Aorta (tissue), 5 donors: ENCODE measurements at regions of chr7 and their contacts with region 1.

Region 1: GRCh38 chr7:123557398-123558288 is at the start of gene NDUFA5:
- DNase-seq: peak; percentile 96 to 98
- ATAC-seq: peak; percentile 100
- H3K4me3 ChIP-seq: peak within 1 kb of the TSS; percentile 93 to 99
- H3K27ac ChIP-seq: peak within 1 kb of the TSS; percentile 85 to 94
- H3K4me1 ChIP-seq: peaks cover 0 to 2% of the 10 kb centered on the region in 2 donors
- H3K27me3 ChIP-seq: no peaks in the 10 kb centered on the region
- total RNA-seq, gene NDUFA5: 51.1 to 53.6 TPM

Region 2: GRCh38 chr7:123601530-123601929 is 43.9 kb after region 1 on chr7 and contains the start of gene ASB15:
- intact Hi-C with region 1: no loop called
- DNase-seq: no peak
- ATAC-seq: no peak
- H3K4me3 ChIP-seq: no peak within 1 kb of the TSS
- H3K27ac ChIP-seq: no peak within 1 kb of the TSS
- H3K4me1 ChIP-seq: no peaks in the 10 kb centered on the region
- H3K27me3 ChIP-seq: no peaks in the 10 kb centered on the region
- total RNA-seq, gene ASB15: not detected

Region 3: DNA sequence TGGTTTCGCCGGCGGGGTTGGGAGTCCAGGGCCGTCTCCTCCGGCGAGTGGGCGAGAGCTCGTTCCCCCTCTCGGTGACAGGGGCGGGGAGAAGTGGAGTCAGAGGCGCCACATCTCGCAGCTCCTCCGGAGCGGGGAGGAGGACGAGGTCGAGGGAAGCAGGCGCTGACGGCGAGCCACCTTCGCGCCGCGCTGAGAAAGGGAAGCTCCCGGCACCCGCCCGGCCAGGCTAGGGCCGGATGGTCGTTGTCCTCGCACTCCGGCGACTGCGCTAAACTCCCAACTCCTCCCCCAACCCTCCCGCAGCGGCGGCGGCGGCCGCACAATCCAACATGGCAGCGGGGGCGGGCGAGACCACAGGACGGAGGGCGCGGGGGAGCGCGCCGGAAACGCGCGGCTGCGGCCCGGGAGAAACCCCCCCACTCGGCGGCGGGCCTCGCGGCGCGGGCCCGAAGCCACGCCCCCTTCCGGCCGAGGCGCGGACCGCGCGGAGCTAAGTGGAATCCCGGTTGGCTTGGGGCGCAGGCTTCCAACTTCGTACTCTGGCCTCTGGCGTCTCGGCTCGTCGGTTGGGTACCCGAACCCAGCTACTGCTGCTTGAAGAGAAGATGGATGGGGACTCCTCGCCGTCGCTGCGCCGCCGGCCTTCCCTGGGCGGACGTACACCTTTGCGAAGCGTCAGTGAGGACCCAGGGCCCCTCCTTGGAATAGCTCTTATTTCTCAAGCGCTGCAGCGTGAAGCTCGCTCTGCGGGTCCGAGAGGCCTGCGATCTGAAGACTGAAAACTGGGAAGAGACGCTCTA is 191.3 kb after region 1 on chr7 and contains the start of gene WASL:
- intact Hi-C with region 1: loop called in 1 of 2 experiments (anchors 5 kb)
- DNase-seq: peak; percentile 94 to 98
- ATAC-seq: peak; percentile 98
- H3K4me3 ChIP-seq: peak within 1 kb of the TSS; percentile 83 to 85
- H3K27ac ChIP-seq: peak within 1 kb of the TSS; percentile 96 to 99
- H3K4me1 ChIP-seq: peaks cover 0 to 4% of the 10 kb centered on the region in 2 donors
- H3K27me3 ChIP-seq: no peaks in the 10 kb centered on the region
- total RNA-seq, gene WASL: 46.0 to 48.2 TPM